Esophagus squamous epithelium (tissue), 5 donors: ENCODE measurements at regions of chr5 and their contacts with region 1.

Region 1: GRCh38 chr5:158007336-158007735 is 148.4 kb upstream of the CLINT1 start:
- DNase-seq: no peak
- H3K4me3 ChIP-seq: no peak overlapping the region
- H3K27ac ChIP-seq: no peak overlapping the region
- H3K4me1 ChIP-seq: no peaks in the 10 kb centered on the region
- H3K27me3 ChIP-seq: no peaks in the 10 kb centered on the region
- CTCF ChIP-seq: no peak
- POLR2A ChIP-seq: no peak

Region 2: GRCh38 chr5:157563373-157563928 is 443.9 kb before region 1 on chr5:
- intact Hi-C with region 1: loop called (anchors 10 kb)
- DNase-seq: no peak
- H3K4me3 ChIP-seq: no peak overlapping the region
- H3K27ac ChIP-seq: peak overlapping the region; percentile 36 to 84 (median 65)
- H3K4me1 ChIP-seq: peaks cover 20 to 84% (median 48%) of the 10 kb centered on the region in 3 donors
- H3K27me3 ChIP-seq: no peaks in the 10 kb centered on the region
- CTCF ChIP-seq: no peak
- POLR2A ChIP-seq: no peak

Region 3: GRCh38 chr5:157971571-157972216 is 35.6 kb before region 1 on chr5:
- intact Hi-C with region 1: no loop called
- DNase-seq: no peak
- H3K4me3 ChIP-seq: no peak overlapping the region
- H3K27ac ChIP-seq: no peak overlapping the region
- H3K4me1 ChIP-seq: no peaks in the 10 kb centered on the region
- H3K27me3 ChIP-seq: no peaks in the 10 kb centered on the region
- CTCF ChIP-seq: no peak
- POLR2A ChIP-seq: no peak

Region 4: DNA sequence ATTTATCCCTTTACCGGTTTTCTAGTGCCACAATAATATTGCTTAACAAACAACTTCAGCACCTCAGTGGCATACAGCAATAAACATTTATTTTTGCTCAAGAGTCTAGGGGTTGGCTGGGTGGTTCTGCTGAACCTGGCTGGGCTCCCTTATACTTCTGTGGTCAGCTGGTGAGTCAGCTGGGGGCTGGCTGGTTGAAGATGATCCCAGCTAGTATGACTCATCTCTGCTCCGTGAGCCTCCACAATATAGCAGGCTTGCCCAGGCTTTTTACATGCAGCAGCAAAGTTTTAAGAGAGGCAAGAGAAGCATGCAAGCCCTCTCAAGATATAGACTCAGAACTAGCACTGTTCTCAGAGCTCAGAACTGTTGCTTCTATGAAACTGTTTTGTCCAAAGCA is 375.1 kb after region 1 on chr5:
- intact Hi-C with region 1: no loop called
- DNase-seq: peak; percentile 4
- H3K4me3 ChIP-seq: no peak overlapping the region
- H3K27ac ChIP-seq: no peak overlapping the region
- H3K4me1 ChIP-seq: peaks cover 10 to 38% (median 12%) of the 10 kb centered on the region in 3 donors
- H3K27me3 ChIP-seq: no peaks in the 10 kb centered on the region
- CTCF ChIP-seq: no peak
- POLR2A ChIP-seq: no peak

Region 5: GRCh38 chr5:158414780-158415179 is 407.4 kb after region 1 on chr5:
- intact Hi-C with region 1: no loop called
- DNase-seq: no peak
- H3K4me3 ChIP-seq: no peak overlapping the region
- H3K27ac ChIP-seq: peak overlapping the region in 2 of 4 donors; percentile 30 to 57
- H3K4me1 ChIP-seq: no peaks in the 10 kb centered on the region
- H3K27me3 ChIP-seq: no peaks in the 10 kb centered on the region
- CTCF ChIP-seq: no peak
- POLR2A ChIP-seq: no peak